Caco-2 (cell line): ENCODE measurements at regions of chr10 and their contacts with region 1.

Region 1: DNA sequence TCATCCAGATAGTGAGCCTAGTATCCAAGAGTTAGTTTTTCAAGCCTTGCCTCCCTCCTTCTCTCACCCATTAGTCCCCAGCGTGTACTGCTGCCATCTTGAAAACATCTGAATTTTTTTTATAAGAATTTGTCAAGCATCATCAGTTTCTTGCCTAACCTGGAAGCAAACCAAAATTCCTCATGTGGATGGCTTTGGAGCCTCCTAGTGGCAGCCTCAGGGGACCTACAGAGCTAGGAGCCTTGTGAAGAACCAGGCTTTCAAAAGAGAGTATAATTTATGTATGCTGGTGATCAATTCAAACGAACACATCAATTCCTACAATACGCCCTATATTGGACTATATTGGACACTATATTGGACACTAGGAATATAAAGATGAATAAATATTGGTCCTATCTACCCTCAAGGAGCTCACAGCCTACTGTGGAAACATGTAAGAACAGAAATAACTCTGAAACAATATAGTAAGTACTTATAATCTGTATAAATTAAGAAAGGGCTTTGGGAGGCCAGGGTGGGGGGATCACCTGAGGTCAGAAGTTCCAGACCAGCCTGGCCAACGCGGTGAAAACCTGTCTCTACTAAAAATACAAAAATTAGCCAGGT is 63.4 kb downstream of the HPSE2 start:
- DNase-seq: peak; percentile 56 to 59
- H3K4me3 ChIP-seq: no peak overlapping the region
- H3K4me3 Mint-ChIP-seq: no peak overlapping the region
- H3K27ac Mint-ChIP-seq: no peak overlapping the region
- H3K4me1 ChIP-seq: no peaks in the 10 kb centered on the region
- H3K4me1 Mint-ChIP-seq: no peaks in the 10 kb centered on the region
- H3K27me3 ChIP-seq: no peaks in the 10 kb centered on the region
- H3K27me3 Mint-ChIP-seq: peaks cover 22% of the 10 kb centered on the region
- CTCF ChIP-seq: peak; percentile 78 to 90

Region 2: DNA sequence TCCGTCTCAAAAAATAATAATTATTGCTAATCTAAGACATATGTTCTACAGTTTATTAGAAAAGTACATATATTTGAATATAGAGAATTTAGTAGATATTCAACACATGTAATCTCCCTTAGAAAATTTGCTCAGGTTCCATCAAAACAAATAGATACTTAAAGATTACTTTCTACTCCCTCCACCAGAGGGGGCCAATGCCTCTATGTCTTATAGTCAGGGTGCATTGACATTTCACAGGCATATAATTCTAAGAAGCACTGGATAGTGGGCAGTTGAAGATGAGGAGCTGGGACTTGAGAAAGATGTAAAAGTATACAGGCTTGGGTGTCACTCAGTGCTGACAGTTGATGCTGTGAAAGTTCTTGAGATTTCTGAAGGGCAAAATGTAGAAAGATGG is 423.9 kb before region 1 on chr10:
- CTCF ChIA-PET with region 1: interaction called, 3 read pairs
- POLR2A ChIA-PET with region 1: no interaction called
- intact Hi-C with region 1: loop called (anchors 1 kb)
- DNase-seq: peak in 1 of 2 experiments; percentile 35
- H3K4me3 ChIP-seq: no peak overlapping the region
- H3K4me3 Mint-ChIP-seq: no peak overlapping the region
- H3K27ac Mint-ChIP-seq: no peak overlapping the region
- H3K4me1 ChIP-seq: no peaks in the 10 kb centered on the region
- H3K4me1 Mint-ChIP-seq: no peaks in the 10 kb centered on the region
- H3K27me3 ChIP-seq: no peaks in the 10 kb centered on the region
- H3K27me3 Mint-ChIP-seq: no peaks in the 10 kb centered on the region
- CTCF ChIP-seq: peak; percentile 34 to 35

Region 3: DNA sequence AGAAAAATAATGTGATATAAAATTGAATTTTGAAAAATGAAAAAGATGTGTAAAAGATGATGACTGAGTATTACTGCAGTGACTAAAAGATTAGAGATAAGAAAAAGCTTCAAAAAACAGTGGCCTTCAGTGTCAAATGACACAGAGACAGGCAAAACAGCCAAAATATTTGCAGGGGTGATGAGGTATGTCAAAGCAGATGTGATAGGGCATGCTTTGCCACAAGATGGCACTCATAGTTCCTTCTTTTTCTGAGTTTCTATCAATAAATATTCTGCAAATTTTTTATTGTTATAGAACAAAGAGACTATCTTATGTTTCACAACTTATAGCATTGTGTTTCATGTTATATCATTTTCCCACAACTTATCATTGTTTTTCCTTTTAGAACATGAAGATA is 381.4 kb before region 1 on chr10:
- CTCF ChIA-PET with region 1: no interaction called
- POLR2A ChIA-PET with region 1: no interaction called
- intact Hi-C with region 1: loop called (anchors 5 kb)
- DNase-seq: no peak
- H3K4me3 ChIP-seq: no peak overlapping the region
- H3K4me3 Mint-ChIP-seq: no peak overlapping the region
- H3K27ac Mint-ChIP-seq: no peak overlapping the region
- H3K4me1 ChIP-seq: no peaks in the 10 kb centered on the region
- H3K4me1 Mint-ChIP-seq: no peaks in the 10 kb centered on the region
- H3K27me3 ChIP-seq: no peaks in the 10 kb centered on the region
- H3K27me3 Mint-ChIP-seq: no peaks in the 10 kb centered on the region
- CTCF ChIP-seq: peak; percentile 26 to 31

Region 4: DNA sequence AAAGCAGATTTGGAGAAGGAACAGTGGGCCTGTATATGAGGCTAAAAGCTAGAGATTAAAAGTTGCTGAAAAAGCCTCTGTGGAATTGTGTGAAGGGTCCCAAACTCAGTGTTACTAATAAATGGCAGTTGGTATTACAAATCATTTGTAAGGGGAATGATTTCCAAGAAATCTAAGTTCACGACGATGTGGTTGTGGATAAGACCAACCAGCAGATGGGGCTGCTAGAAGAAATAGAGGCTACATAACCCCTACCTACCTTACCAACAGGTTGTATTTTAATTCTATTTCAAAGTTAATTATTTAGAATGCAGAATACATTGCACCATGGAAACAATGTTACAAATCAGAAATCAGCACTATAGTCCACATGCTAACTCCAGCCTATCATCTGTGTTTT is 313.7 kb before region 1 on chr10:
- CTCF ChIA-PET with region 1: no interaction called
- POLR2A ChIA-PET with region 1: no interaction called
- intact Hi-C with region 1: loop called (anchors 1 kb)
- DNase-seq: peak in 1 of 2 experiments; percentile 3
- H3K4me3 ChIP-seq: no peak overlapping the region
- H3K4me3 Mint-ChIP-seq: no peak overlapping the region
- H3K27ac Mint-ChIP-seq: no peak overlapping the region
- H3K4me1 ChIP-seq: no peaks in the 10 kb centered on the region
- H3K4me1 Mint-ChIP-seq: no peaks in the 10 kb centered on the region
- H3K27me3 ChIP-seq: no peaks in the 10 kb centered on the region
- H3K27me3 Mint-ChIP-seq: no peaks in the 10 kb centered on the region
- CTCF ChIP-seq: peak; percentile 21 to 28

Region 5: DNA sequence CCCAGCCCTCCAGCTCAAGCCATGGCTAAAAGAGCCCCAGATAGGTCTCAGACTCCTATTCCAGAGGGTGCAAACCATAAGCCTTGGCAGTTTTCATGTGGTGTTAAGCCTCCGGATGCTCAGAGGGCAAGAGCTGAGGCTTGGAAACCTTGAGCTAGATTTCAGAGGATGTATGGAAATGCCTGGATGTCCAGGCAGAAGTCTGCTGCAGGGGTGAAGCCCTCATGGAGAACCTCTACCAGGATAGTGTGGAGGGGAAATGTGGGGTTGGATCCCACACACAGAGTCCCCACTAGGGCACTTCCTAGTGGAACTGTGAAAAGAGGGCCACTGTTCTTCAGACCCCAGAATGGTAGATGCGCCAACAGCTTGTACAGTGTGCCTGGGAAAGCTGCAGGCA is 76.6 kb after region 1 on chr10:
- CTCF ChIA-PET with region 1: interaction called, 7 read pairs
- POLR2A ChIA-PET with region 1: no interaction called
- intact Hi-C with region 1: loop called (anchors 5 kb)
- DNase-seq: no peak
- H3K4me3 ChIP-seq: no peak overlapping the region
- H3K4me3 Mint-ChIP-seq: no peak overlapping the region
- H3K27ac Mint-ChIP-seq: no peak overlapping the region
- H3K4me1 ChIP-seq: no peaks in the 10 kb centered on the region
- H3K4me1 Mint-ChIP-seq: no peaks in the 10 kb centered on the region
- H3K27me3 ChIP-seq: no peaks in the 10 kb centered on the region
- H3K27me3 Mint-ChIP-seq: no peaks in the 10 kb centered on the region
- CTCF ChIP-seq: no peak